ENCODE measurements at regions of chr5 and their contacts with region 1.

Region 1: DNA sequence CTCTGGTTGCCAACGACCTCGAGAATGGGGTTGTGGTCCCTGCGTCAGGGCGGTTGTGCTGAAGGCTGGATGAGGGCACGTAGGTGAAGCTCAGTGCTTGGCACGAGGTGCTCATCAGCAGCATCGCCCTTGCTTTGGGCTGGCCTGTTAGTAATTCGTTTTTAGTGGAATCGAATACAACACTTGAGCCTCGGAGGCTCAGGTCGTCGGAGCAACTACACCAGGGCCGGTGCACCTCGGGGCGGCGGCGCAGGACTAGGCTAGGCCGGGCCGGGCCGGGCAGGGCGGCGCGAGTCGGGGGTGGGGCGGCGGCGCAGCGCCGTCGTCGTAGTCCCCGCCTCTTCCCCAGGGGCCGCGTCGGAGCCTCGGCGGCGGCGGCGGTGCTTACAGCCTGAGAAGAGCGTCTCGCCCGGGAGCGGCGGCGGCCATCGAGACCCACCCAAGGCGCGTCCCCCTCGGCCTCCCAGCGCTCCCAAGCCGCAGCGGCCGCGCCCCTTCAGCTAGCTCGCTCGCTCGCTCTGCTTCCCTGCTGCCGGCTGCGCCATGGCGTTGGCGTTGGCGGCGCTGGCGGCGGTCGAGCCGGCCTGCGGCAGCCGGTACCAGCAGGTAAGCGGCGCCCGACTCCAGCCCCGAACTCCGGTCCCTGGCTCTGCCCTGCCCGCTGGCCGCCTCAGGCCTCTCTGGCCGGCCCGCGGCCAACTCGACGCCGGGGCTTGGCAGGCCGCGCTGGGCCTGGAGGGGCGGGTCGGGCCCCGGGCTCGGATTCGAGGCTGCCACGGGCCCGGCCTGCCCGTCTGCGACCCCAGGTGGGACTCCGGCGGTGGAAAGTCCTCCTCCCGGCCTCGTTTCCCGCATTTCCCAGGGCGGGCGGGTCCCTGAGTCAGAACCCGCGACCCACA is at the start of gene NDFIP1:
- DNase-seq: peak; percentile 80 to 93 (median 91)
- ATAC-seq: peak; percentile 89
- H3K4me3 ChIP-seq: peak within 1 kb of the TSS; percentile 75
- H3K4me3 Mint-ChIP-seq: peak within 1 kb of the TSS; percentile 94 to 100 (median 98)
- H3K27ac ChIP-seq: peak within 1 kb of the TSS; percentile 99
- H3K27ac Mint-ChIP-seq: peak within 1 kb of the TSS; percentile 92 to 100 (median 98)
- H3K4me1 ChIP-seq: peaks cover 28 to 64% of the 10 kb centered on the region in 2 donors
- H3K4me1 Mint-ChIP-seq: peaks cover 38 to 78% (median 71%) of the 10 kb centered on the region in 7 donors
- H3K27me3 ChIP-seq: no peaks in the 10 kb centered on the region
- H3K27me3 Mint-ChIP-seq: no peaks in the 10 kb centered on the region
- total RNA-seq, gene NDFIP1: 53.0 to 136 (median 95.5) TPM

Region 2: GRCh38 chr5:141618804-141619554 is 489.7 kb before region 1 on chr5 and contains the start of gene DIAPH1:
- CTCF ChIA-PET with region 1: no interaction called
- POLR2A ChIA-PET with region 1: no interaction called
- intact Hi-C with region 1: loop called in 1 of 2 experiments (anchors 5 kb)
- DNase-seq: peak; percentile 91 to 98 (median 96)
- ATAC-seq: peak; percentile 98
- H3K4me3 ChIP-seq: peak within 1 kb of the TSS; percentile 77
- H3K4me3 Mint-ChIP-seq: peak within 1 kb of the TSS; percentile 94 to 100 (median 100)
- H3K27ac ChIP-seq: peak within 1 kb of the TSS; percentile 97
- H3K27ac Mint-ChIP-seq: peak within 1 kb of the TSS; percentile 91 to 99 (median 95)
- H3K4me1 ChIP-seq: peaks cover 11 to 22% of the 10 kb centered on the region in 2 donors
- H3K4me1 Mint-ChIP-seq: peaks cover 44 to 61% (median 56%) of the 10 kb centered on the region in 7 donors
- H3K27me3 ChIP-seq: no peaks in the 10 kb centered on the region
- H3K27me3 Mint-ChIP-seq: no peaks in the 10 kb centered on the region
- total RNA-seq, gene DIAPH1: 163 to 278 (median 173) TPM

Region 3: GRCh38 chr5:141968914-141969608 is 139.6 kb before region 1 on chr5 and contains the start of gene RNF14:
- CTCF ChIA-PET with region 1: interaction called, 5 read pairs
- POLR2A ChIA-PET with region 1: interaction called, 6 read pairs
- intact Hi-C with region 1: loop called (anchors 1 kb)
- DNase-seq: peak; percentile 90 to 96 (median 92)
- ATAC-seq: peak; percentile 97
- H3K4me3 ChIP-seq: peak within 1 kb of the TSS; percentile 69
- H3K4me3 Mint-ChIP-seq: peak within 1 kb of the TSS; percentile 88 to 97 (median 94)
- H3K27ac ChIP-seq: peak within 1 kb of the TSS; percentile 94
- H3K27ac Mint-ChIP-seq: peak within 1 kb of the TSS; percentile 92 to 98 (median 97)
- H3K4me1 ChIP-seq: peaks cover 13 to 18% of the 10 kb centered on the region in 2 donors
- H3K4me1 Mint-ChIP-seq: peaks cover 12 to 47% (median 40%) of the 10 kb centered on the region in 7 donors
- H3K27me3 ChIP-seq: no peaks in the 10 kb centered on the region
- H3K27me3 Mint-ChIP-seq: peaks cover 0 to 2% (median 0%) of the 10 kb centered on the region in 5 donors
- total RNA-seq, gene RNF14: 14.7 to 32.0 (median 24.8) TPM

Region 4: GRCh38 chr5:142024771-142025304 is 83.8 kb before region 1 on chr5:
- CTCF ChIA-PET with region 1: interaction called, 4 read pairs
- POLR2A ChIA-PET with region 1: interaction called, 38 read pairs
- intact Hi-C with region 1: loop called (anchors 1 kb)
- DNase-seq: peak; percentile 61 to 85 (median 82)
- ATAC-seq: peak; percentile 100
- H3K4me3 ChIP-seq: peak overlapping the region; percentile 62
- H3K4me3 Mint-ChIP-seq: peak overlapping the region; percentile 81 to 97 (median 92)
- H3K27ac ChIP-seq: peak overlapping the region; percentile 79
- H3K27ac Mint-ChIP-seq: peak overlapping the region; percentile 96 to 100 (median 98)
- H3K4me1 ChIP-seq: peaks cover 4 to 11% of the 10 kb centered on the region in 2 donors
- H3K4me1 Mint-ChIP-seq: peaks cover 5 to 20% (median 18%) of the 10 kb centered on the region in 7 donors
- H3K27me3 ChIP-seq: no peaks in the 10 kb centered on the region
- H3K27me3 Mint-ChIP-seq: no peaks in the 10 kb centered on the region

Region 5: GRCh38 chr5:142087920-142088679 is 20.6 kb before region 1 on chr5:
- CTCF ChIA-PET with region 1: interaction called, 6 read pairs
- POLR2A ChIA-PET with region 1: interaction called, 127 read pairs
- intact Hi-C with region 1: no loop called
- DNase-seq: no peak
- ATAC-seq: peak; percentile 63
- H3K4me3 ChIP-seq: no peak overlapping the region
- H3K4me3 Mint-ChIP-seq: peak overlapping the region in 4 of 10 donors; percentile 13 to 38 (median 18)
- H3K27ac ChIP-seq: no peak overlapping the region
- H3K27ac Mint-ChIP-seq: peak overlapping the region in 7 of 9 donors; percentile 34 to 70 (median 46)
- H3K4me1 ChIP-seq: peaks cover 5 to 25% of the 10 kb centered on the region in 2 donors
- H3K4me1 Mint-ChIP-seq: peaks cover 0 to 64% (median 48%) of the 10 kb centered on the region in 7 donors
- H3K27me3 ChIP-seq: no peaks in the 10 kb centered on the region
- H3K27me3 Mint-ChIP-seq: no peaks in the 10 kb centered on the region

Region 6: DNA sequence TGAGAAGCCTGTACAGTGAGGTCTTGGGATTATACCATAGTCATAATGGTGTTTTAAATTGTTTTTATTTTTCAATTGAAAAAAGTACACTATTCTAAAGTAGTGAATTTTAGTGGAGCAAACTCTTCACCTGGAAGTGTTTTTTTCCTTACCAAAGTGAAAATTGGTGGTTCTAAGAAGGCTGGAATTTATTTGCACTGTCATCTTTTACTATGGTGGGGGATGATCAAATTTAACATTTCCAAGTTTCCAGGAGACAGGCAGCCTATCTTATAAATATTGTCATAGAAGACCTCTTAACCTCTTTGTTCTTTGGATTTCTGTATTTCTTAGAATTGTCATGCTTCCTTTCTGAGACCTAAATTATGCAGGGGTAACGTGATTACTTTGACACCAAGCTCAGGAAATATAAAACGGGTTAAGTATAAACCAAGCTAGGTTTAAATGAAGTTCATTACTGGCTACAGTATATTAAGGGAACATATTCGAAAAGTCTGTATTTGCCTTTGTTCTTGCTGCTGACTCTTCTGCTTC is 20.1 kb after region 1 on chr5:
- CTCF ChIA-PET with region 1: interaction called, 3 read pairs
- POLR2A ChIA-PET with region 1: interaction called, 19 read pairs
- intact Hi-C with region 1: loop called (anchors 1 to 2 kb)
- DNase-seq: peak in 2 of 9 donors; percentile 46 to 50
- ATAC-seq: peak; percentile 82
- H3K4me3 ChIP-seq: no peak overlapping the region
- H3K4me3 Mint-ChIP-seq: peak overlapping the region; percentile 33 to 78 (median 68)
- H3K27ac ChIP-seq: no peak overlapping the region
- H3K27ac Mint-ChIP-seq: peak overlapping the region in 8 of 9 donors; percentile 51 to 78 (median 67)
- H3K4me1 ChIP-seq: peaks cover 27 to 62% of the 10 kb centered on the region in 2 donors
- H3K4me1 Mint-ChIP-seq: peaks cover 0 to 77% (median 58%) of the 10 kb centered on the region in 7 donors
- H3K27me3 ChIP-seq: no peaks in the 10 kb centered on the region
- H3K27me3 Mint-ChIP-seq: no peaks in the 10 kb centered on the region

Region 7: DNA sequence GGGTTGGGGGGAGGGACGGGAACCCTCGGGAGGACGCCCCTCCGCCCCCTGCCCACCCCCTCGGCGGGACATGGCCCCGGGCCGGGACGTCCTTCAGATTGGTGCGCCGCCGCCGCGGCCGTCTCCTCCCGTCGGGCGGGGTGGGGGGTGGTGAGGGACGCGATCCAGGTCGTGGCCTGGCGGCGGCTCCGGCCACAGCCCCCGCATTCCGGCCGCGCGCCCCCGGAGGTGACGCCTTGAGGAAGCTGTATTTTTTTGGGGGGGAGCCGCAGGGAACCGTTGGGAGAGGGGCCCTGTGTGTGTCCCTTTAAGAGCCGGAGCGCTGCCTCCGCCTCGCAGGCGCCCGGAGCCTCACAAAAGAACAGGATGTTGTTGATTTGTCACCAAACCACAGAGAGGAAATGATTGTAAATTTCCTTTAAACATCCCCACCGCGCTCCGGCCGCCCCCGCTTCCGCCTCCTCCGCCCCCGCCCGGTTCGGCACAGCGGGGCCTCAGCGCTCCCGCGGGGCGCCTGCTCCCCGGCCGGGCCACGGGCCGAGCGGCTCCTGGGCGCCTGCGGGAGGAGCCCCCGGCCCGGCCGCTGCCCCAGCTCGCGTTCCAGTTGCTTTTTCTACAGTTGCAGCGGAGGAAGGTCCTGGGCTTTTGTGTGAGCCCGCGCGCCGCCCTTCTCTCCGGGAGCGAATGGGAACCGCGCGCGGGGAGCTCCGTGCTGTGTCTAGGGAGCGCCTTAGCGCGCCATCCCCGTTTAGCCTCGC is 248.2 kb after region 1 on chr5:
- CTCF ChIA-PET with region 1: interaction called, 3 read pairs
- POLR2A ChIA-PET with region 1: no interaction called
- intact Hi-C with region 1: loop called (anchors 1 kb)
- DNase-seq: peak; percentile 69 to 96 (median 88)
- ATAC-seq: peak; percentile 95
- H3K4me3 ChIP-seq: peak overlapping the region; percentile 62
- H3K4me3 Mint-ChIP-seq: peak overlapping the region; percentile 78 to 88 (median 86)
- H3K27ac ChIP-seq: peak overlapping the region; percentile 35
- H3K27ac Mint-ChIP-seq: peak overlapping the region; percentile 58 to 93 (median 86)
- H3K4me1 ChIP-seq: peaks cover 15 to 35% of the 10 kb centered on the region in 2 donors
- H3K4me1 Mint-ChIP-seq: peaks cover 24 to 64% (median 53%) of the 10 kb centered on the region in 7 donors
- H3K27me3 ChIP-seq: no peaks in the 10 kb centered on the region
- H3K27me3 Mint-ChIP-seq: peaks cover 0 to 12% (median 0%) of the 10 kb centered on the region in 5 donors